Motor neuron (in vitro differentiated cells): ENCODE measurements at regions of chr18 and their contacts with region 1.

Region 1: DNA sequence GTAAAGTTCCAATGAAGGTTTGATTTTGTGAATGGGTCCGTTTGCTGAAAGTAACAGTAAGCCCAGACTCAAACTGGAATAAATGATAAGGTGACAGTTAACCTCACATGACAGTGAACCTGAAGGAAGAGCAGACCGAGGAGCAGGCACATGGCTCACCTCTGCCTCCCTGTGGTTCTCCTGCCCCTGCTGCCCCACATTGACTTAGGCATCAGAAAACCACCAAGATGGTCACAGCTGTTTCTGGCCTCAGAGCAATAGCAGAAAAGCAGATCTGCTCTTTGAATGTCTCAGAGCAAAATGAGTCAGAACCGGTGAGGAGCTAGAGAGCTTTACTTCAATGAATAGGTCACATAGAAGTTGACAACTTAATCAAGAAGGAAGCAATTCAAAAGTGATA is 487.6 kb downstream of the METTL4 start:
- ATAC-seq: peak in 2 of 8 experiments; percentile 24 to 58
- H3K4me3 ChIP-seq: no peak overlapping the region
- H3K27ac ChIP-seq: no peak overlapping the region
- H3K4me1 ChIP-seq: peaks cover 4 to 15% of the 10 kb centered on the region in 2 donors

Region 2: GRCh38 chr18:1604751-1605150 is 478.9 kb before region 1 on chr18:
- in situ Hi-C with region 1: loop called in 1 of 9 experiments (anchors 25 kb)
- ATAC-seq: no peak
- H3K4me3 ChIP-seq: no peak overlapping the region
- H3K27ac ChIP-seq: no peak overlapping the region
- H3K4me1 ChIP-seq: no peaks in the 10 kb centered on the region

Region 3: DNA sequence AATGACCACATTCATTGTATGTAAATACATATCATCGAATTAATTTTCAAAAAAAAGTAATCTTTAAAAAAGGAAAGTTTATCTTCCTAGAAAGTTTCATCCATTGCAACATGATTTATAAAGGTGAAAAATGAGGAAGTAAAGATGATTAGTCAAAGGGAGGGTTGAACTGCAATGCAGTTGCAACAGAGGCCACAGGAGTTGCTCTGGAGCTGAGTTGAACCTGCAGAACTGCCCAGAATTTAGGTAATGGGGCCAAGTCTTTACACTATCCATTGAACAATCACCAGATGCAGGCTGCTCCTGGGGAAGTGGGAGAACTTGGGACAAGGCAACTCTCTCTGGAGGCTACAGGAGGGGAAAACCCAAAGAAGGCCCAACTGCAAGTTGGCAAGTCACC is 96.9 kb after region 1 on chr18:
- in situ Hi-C with region 1: loop called in 1 of 9 experiments (anchors 25 kb)
- ATAC-seq: no peak
- H3K4me3 ChIP-seq: no peak overlapping the region
- H3K27ac ChIP-seq: no peak overlapping the region
- H3K4me1 ChIP-seq: no peaks in the 10 kb centered on the region

Region 4: DNA sequence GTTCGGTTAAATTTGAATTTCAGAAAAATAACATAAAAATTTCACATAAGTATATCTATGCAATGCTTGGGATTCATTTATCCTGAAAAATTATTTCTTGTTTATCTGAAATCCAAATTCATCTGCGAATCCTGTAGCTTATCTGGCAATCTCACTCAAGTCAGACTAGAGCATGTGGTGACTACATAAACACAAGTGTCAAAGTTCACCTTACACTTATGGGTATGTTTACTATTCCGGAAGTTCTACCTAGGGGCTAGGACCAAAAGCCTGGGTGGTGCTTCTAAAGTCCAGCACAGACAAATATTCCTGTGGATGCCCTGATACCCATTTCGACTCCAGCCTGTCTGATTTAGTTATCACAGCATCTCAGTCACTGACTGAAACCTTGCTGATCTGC is 123.6 kb after region 1 on chr18:
- in situ Hi-C with region 1: no loop called
- ATAC-seq: no peak
- H3K4me3 ChIP-seq: no peak overlapping the region
- H3K27ac ChIP-seq: no peak overlapping the region
- H3K4me1 ChIP-seq: no peaks in the 10 kb centered on the region